CD8-positive, alpha-beta T cell (primary cell): ENCODE measurements at regions of chr5 and their contacts with region 1.

Region 1: DNA sequence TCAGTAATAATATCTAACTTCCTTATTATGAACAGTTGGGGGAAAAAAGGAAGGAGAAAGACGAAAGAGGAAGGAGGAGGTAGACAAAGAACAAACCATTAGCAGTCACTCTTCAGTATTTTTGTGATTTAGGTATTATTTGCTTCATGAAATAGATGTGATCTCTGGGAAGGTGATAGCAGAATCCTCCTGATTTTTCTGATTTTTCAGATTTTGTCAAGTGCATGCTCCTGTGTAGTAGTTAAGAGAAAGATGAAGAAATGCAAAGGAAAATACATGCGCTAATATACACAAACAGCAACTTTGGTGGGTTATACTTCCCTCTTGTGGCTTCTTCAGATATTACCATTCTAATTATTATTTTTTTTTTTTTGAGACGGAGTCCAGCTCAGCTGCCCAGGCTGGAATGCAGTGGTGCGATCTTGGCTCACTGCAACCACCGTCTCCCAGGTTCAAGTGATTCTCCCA is 31.6 kb downstream of the LMNB1 start:
- DNase-seq: peak in 2 of 9 experiments; percentile 29 to 50
- ATAC-seq: no peak
- H3K4me3 ChIP-seq: no peak overlapping the region
- H3K4me3 Mint-ChIP-seq: no peak overlapping the region
- H3K27ac ChIP-seq: no peak overlapping the region
- H3K27ac Mint-ChIP-seq: no peak overlapping the region
- H3K4me1 ChIP-seq: no peaks in the 10 kb centered on the region
- H3K4me1 Mint-ChIP-seq: peaks cover 26% of the 10 kb centered on the region
- H3K27me3 ChIP-seq: no peaks in the 10 kb centered on the region
- H3K27me3 Mint-ChIP-seq: no peaks in the 10 kb centered on the region
- CTCF ChIP-seq: peak; percentile 64

Region 2: DNA sequence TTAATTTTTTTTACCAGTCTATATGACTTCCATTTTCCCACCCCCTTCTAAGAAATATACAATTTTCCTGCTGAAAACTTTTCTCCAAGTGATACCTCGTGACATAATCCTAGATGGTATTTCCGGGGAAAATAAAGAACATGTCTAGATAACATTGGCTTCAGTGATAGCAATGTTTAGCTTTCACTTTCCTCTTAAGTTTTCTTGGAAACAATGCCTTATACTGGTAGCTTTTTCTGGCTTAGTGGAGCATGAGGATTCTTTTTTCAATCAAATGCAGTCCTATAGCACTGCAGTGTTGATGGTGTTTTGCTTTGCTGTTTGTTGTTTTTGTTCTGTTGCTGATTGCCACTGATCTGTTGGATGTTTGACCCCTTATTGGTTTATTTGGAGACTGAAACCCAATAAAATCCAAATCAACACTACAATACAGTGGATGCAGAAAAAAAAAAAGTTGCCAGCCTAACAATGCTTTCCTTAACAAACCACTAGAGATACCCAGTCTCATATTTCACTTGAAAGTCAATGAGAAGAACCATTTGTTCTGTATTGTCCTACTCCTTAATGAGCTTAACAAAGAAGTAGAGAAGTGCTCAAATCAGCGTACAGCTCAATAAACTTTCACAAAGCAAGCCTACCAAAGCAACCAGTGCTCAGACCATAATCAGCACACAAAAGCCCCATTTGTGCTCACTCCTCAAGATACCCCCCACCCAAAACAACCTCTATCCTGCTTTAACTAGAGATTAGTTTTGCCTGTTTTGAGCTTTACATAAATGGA is 459.5 kb before region 1 on chr5:
- CTCF ChIA-PET with region 1: no interaction called
- POLR2A ChIA-PET with region 1: no interaction called
- intact Hi-C with region 1: loop called in 1 of 2 experiments (anchors 10 kb)
- DNase-seq: no peak
- ATAC-seq: no peak
- H3K4me3 ChIP-seq: no peak overlapping the region
- H3K4me3 Mint-ChIP-seq: no peak overlapping the region
- H3K27ac ChIP-seq: no peak overlapping the region
- H3K27ac Mint-ChIP-seq: no peak overlapping the region
- H3K4me1 ChIP-seq: peaks cover 2% of the 10 kb centered on the region
- H3K4me1 Mint-ChIP-seq: peaks cover 3% of the 10 kb centered on the region
- H3K27me3 ChIP-seq: no peaks in the 10 kb centered on the region
- H3K27me3 Mint-ChIP-seq: peaks cover 30% of the 10 kb centered on the region
- CTCF ChIP-seq: no peak

Region 3: GRCh38 chr5:126544087-126544740 is 264.3 kb before region 1 on chr5:
- CTCF ChIA-PET with region 1: no interaction called
- POLR2A ChIA-PET with region 1: no interaction called
- intact Hi-C with region 1: loop called in 1 of 2 experiments (anchors 5 kb)
- DNase-seq: peak in 5 of 9 experiments; percentile 17 to 40 (median 36)
- ATAC-seq: no peak
- H3K4me3 ChIP-seq: no peak overlapping the region
- H3K4me3 Mint-ChIP-seq: no peak overlapping the region
- H3K27ac ChIP-seq: no peak overlapping the region
- H3K27ac Mint-ChIP-seq: no peak overlapping the region
- H3K4me1 ChIP-seq: no peaks in the 10 kb centered on the region
- H3K4me1 Mint-ChIP-seq: no peaks in the 10 kb centered on the region
- H3K27me3 ChIP-seq: no peaks in the 10 kb centered on the region
- H3K27me3 Mint-ChIP-seq: no peaks in the 10 kb centered on the region
- CTCF ChIP-seq: peak; percentile 34

Region 4: DNA sequence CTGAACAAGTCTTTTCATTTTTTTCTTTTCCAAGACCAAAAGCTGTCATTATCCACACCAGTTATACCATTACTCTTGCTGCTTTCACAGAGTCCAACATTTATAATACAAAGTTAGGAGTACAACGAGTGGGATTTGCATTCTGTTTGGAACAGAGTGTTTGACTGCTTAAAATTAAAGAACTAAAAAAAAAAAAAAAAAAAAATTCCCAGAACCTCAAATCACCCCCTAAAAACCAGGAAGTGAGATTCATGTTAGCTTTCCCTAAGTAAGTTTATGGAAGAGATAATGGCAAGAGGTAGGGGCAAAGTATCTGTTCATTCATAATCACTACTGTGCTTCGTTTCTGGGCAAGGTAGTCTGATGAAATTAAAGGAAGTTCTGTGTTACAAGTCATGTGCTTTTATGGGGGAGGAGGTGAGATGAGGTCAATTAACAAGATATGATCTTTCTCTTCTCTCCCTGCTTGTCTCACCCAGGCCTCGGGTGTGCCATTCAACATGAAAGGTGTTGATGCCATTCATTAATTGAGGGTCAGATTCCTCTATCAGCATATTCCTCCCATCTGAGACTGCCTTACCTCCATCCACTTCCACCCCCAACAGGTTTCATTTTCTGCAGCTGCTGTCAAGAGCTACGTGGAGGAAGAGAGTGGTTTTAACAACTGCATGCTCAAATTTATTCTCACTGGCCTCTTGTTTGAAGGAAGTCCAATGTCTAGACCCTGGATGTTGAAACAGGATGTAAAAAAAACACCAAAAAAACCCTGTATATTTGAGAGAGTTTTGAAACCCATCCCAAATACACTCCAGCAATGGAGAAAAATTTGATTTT is 163.7 kb after region 1 on chr5:
- CTCF ChIA-PET with region 1: no interaction called
- POLR2A ChIA-PET with region 1: no interaction called
- intact Hi-C with region 1: no loop called
- DNase-seq: peak in 7 of 9 experiments; percentile 12 to 75 (median 38)
- ATAC-seq: peak; percentile 76
- H3K4me3 ChIP-seq: peak overlapping the region in 1 of 2 experiments; percentile 10
- H3K4me3 Mint-ChIP-seq: peak overlapping the region; percentile 76
- H3K27ac ChIP-seq: peak overlapping the region; percentile 8 to 66
- H3K27ac Mint-ChIP-seq: peak overlapping the region; percentile 86
- H3K4me1 ChIP-seq: peaks cover 23% of the 10 kb centered on the region
- H3K4me1 Mint-ChIP-seq: peaks cover 36% of the 10 kb centered on the region
- H3K27me3 ChIP-seq: no peaks in the 10 kb centered on the region
- H3K27me3 Mint-ChIP-seq: no peaks in the 10 kb centered on the region
- CTCF ChIP-seq: no peak